CD4-positive, alpha-beta T cell (primary cell): ENCODE measurements at regions of chr5 and their contacts with region 1.

Region 1: GRCh38 chr5:117590944-117591343 is 1016.3 kb upstream of the SEMA6A start:
- DNase-seq: no peak
- ATAC-seq: no peak
- H3K4me3 ChIP-seq: no peak overlapping the region
- H3K4me3 Mint-ChIP-seq: no peak overlapping the region
- H3K27ac ChIP-seq: no peak overlapping the region
- H3K27ac Mint-ChIP-seq: no peak overlapping the region
- H3K4me1 ChIP-seq: no peaks in the 10 kb centered on the region
- H3K4me1 Mint-ChIP-seq: no peaks in the 10 kb centered on the region
- H3K27me3 ChIP-seq: no peaks in the 10 kb centered on the region
- H3K27me3 Mint-ChIP-seq: no peaks in the 10 kb centered on the region
- CTCF ChIP-seq: no peak

Region 2: GRCh38 chr5:117547192-117547591 is 43.8 kb before region 1 on chr5:
- CTCF ChIA-PET with region 1: no interaction called
- POLR2A ChIA-PET with region 1: no interaction called
- intact Hi-C with region 1: no loop called
- DNase-seq: no peak
- ATAC-seq: no peak
- H3K4me3 ChIP-seq: no peak overlapping the region
- H3K4me3 Mint-ChIP-seq: no peak overlapping the region
- H3K27ac ChIP-seq: no peak overlapping the region
- H3K27ac Mint-ChIP-seq: no peak overlapping the region
- H3K4me1 ChIP-seq: no peaks in the 10 kb centered on the region
- H3K4me1 Mint-ChIP-seq: no peaks in the 10 kb centered on the region
- H3K27me3 ChIP-seq: no peaks in the 10 kb centered on the region
- H3K27me3 Mint-ChIP-seq: no peaks in the 10 kb centered on the region
- CTCF ChIP-seq: no peak

Region 3: GRCh38 chr5:117615226-117615625 is 24.3 kb after region 1 on chr5:
- CTCF ChIA-PET with region 1: no interaction called
- POLR2A ChIA-PET with region 1: no interaction called
- intact Hi-C with region 1: loop called in 1 of 2 experiments (anchors 1 kb)
- DNase-seq: no peak
- ATAC-seq: no peak
- H3K4me3 ChIP-seq: no peak overlapping the region
- H3K4me3 Mint-ChIP-seq: no peak overlapping the region
- H3K27ac ChIP-seq: no peak overlapping the region
- H3K27ac Mint-ChIP-seq: no peak overlapping the region
- H3K4me1 ChIP-seq: no peaks in the 10 kb centered on the region
- H3K4me1 Mint-ChIP-seq: no peaks in the 10 kb centered on the region
- H3K27me3 ChIP-seq: no peaks in the 10 kb centered on the region
- H3K27me3 Mint-ChIP-seq: no peaks in the 10 kb centered on the region
- CTCF ChIP-seq: no peak